ENCODE measurements at regions of chr4 and their contacts with region 1.

Region 1: GRCh38 chr4:83276299-83277040 is 8.1 kb downstream of the COQ2 start:
- DNase-seq: no peak
- ATAC-seq: no peak
- H3K4me3 ChIP-seq: no peak overlapping the region
- H3K27ac ChIP-seq: no peak overlapping the region
- H3K4me1 ChIP-seq: peaks cover 0 to 2% of the 10 kb centered on the region in 2 experiments; a peak in 4 of 5 replicates
- H3K27me3 ChIP-seq: no peaks in the 10 kb centered on the region
- CTCF ChIP-seq: no peak
- EP300 ChIP-seq: no peak
- POLR2A ChIP-seq: no peak
- RAD21 ChIP-seq: no peak

Region 2: DNA sequence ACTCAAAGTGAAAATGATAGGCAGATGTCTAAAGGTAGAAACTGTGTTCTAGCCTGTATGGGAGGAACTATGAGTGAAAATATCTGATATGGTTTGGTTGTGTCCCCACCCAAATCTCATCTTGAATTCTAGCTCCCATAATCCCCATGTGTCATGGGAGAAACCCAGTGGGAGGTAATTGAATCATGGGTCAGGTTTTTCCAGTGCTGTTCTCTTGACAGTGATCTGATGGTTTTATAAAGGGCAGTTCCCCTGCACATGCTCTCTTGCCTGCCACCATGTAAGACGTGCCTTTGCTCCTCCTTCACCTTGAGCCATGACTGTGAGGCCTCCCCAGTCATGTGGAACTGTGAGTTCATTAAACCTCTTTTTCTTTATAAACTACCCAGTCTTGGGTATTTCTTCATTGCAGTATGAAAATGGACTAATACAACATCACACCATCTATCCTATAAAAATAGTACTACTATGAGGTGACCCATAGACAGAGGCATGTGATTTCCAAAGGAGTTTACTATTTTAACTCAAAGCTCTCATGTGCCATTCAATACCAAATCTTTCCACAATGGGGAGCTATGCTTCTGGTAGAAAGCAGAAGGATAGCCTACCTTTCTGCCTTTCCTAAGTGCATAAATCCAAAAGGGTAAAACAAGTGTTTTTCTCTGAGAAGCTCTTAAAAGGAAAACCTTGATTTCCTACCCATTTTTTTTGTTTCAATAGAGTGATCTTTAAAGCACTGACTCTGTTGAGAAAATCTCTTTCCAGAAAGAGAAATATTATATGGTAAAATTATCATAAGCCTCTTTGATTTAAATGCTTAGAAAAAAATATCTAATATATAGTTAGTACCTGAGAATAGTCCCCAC is 424.4 kb before region 1 on chr4:
- CTCF ChIA-PET with region 1: no interaction called
- POLR2A ChIA-PET with region 1: no interaction called
- in situ Hi-C with region 1: no loop called
- intact Hi-C with region 1: loop called (anchors 10 kb)
- DNase-seq: peak in 3 of 4 experiments; percentile 17 to 40 (median 22)
- ATAC-seq: peak; percentile 84
- H3K4me3 ChIP-seq: no peak overlapping the region
- H3K27ac ChIP-seq: no peak overlapping the region
- H3K4me1 ChIP-seq: no peaks in the 10 kb centered on the region
- H3K27me3 ChIP-seq: no peaks in the 10 kb centered on the region
- CTCF ChIP-seq: peak; percentile 28 to 46 (median 44); a peak in 5 of 6 replicates
- EP300 ChIP-seq: no peak
- POLR2A ChIP-seq: no peak
- RAD21 ChIP-seq: peak in 1 of 2 experiments; percentile 51; a peak in 2 of 4 replicates

Region 3: DNA sequence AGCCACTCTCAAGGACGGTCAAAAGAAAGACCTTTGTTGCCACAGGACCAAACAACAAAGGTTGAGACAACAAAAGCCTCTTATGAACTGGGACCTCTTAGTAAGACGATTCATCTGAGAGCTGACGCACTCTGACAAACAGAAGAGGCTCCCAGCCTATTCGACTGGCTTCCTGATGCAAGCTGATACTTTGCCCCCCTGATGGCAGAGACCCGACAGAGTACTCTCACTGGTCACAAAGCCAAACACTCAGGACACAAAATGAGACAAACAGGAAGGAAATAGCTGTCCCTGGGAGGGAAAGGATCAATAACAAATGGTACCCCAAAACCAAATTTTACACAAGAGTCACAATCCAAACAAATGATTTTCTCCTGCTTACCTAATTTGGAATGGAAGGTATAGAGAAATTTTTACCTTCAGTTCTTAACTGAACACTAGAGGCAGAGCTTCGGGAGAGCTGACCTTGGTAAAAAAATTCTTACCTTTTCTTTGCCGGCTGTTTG is 86.8 kb before region 1 on chr4:
- CTCF ChIA-PET with region 1: no interaction called
- POLR2A ChIA-PET with region 1: no interaction called
- in situ Hi-C with region 1: no loop called
- intact Hi-C with region 1: no loop called
- DNase-seq: no peak
- ATAC-seq: no peak
- H3K4me3 ChIP-seq: no peak overlapping the region
- H3K27ac ChIP-seq: no peak overlapping the region
- H3K4me1 ChIP-seq: no peaks in the 10 kb centered on the region
- H3K27me3 ChIP-seq: no peaks in the 10 kb centered on the region
- CTCF ChIP-seq: no peak
- EP300 ChIP-seq: no peak
- POLR2A ChIP-seq: no peak
- RAD21 ChIP-seq: no peak

Measured in K562 (cell line).